HEK293 (cell line): ENCODE measurements at regions of chr15 and their contacts with region 1.

Region 1: DNA sequence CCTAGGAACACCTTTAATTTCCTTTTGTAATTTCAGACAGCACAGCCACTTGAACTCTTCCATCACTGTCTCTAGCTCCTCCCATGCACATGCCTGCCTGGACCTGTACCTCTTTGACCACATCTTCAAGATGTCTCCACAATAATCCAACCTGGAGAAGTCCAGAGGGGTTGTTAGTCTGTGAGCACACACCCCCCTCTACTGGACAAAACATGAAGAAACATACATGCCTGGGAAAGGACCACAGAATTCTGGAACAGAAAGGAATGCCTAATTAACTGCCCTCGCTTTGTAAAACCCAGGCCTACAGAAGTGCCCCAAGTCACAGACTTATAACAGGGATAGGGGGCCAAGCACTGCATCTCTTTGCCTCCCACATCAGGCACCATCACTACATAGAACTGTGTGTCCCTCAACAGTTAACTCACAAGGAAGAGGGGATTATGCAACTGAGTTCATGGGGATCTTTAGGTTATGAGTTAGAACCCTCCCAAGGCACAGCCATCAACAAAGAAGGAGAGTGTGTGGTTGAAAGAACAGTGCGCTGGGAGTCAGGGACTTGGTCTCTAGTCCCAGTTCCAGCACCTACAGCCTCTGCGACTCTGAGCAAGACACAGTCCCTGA is 61.7 kb downstream of the FMN1 start:
- H3K4me3 ChIP-seq: no peak overlapping the region
- H3K27ac ChIP-seq: no peak overlapping the region
- H3K4me1 ChIP-seq: peaks cover 4% of the 10 kb centered on the region
- CTCF ChIP-seq: peak; percentile 78

Region 2: GRCh38 chr15:32657198-32657883 is 475.5 kb before region 1 on chr15:
- CTCF ChIA-PET with region 1: interaction called, 12 read pairs
- POLR2A ChIA-PET with region 1: no interaction called
- H3K4me3 ChIP-seq: no peak overlapping the region
- H3K27ac ChIP-seq: no peak overlapping the region
- H3K4me1 ChIP-seq: no peaks in the 10 kb centered on the region
- CTCF ChIP-seq: no peak

Region 3: DNA sequence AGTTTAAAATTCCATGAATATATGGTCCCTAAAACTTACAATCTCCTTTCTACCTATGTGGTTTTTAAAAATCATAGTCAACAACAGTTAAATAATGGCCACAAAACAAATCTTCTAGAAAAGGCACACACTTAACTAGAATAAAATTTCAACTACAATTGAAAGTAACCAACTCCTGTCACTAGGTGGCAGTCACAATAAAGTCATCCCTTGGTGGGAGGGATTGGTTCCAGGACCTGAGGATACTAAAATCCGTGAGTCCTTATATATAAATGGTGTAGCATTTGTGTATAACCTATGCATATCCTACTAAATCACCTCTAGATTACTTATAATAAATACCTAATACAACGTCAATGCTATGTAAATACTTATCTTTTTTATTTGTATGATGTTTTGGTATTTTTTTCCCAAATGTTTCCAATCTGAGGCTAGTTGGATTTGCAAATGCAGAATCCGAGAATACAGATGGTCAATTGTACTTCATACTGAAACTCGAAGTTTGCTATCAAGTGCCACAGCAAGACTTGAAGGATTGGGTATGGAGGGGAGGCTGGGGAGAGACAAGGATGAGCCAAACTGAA is 110.9 kb before region 1 on chr15:
- CTCF ChIA-PET with region 1: interaction called, 20 read pairs
- POLR2A ChIA-PET with region 1: no interaction called
- H3K4me3 ChIP-seq: no peak overlapping the region
- H3K27ac ChIP-seq: no peak overlapping the region
- H3K4me1 ChIP-seq: 0 out of 2 replicates have a peak, but pooled peaks cover 2% of the 10 kb centered on the region
- CTCF ChIP-seq: no peak

Region 4: GRCh38 chr15:33086507-33087121 is 46.2 kb before region 1 on chr15:
- CTCF ChIA-PET with region 1: interaction called, 185 read pairs
- POLR2A ChIA-PET with region 1: interaction called, 4 read pairs
- H3K4me3 ChIP-seq: no peak overlapping the region
- H3K27ac ChIP-seq: no peak overlapping the region
- H3K4me1 ChIP-seq: peaks cover 12% of the 10 kb centered on the region
- CTCF ChIP-seq: 0 out of 2 replicates have a peak, but pooled peaks have one; percentile 14

Region 5: GRCh38 chr15:33119273-33119672 is 13.6 kb before region 1 on chr15:
- CTCF ChIA-PET with region 1: interaction called, 11 read pairs
- POLR2A ChIA-PET with region 1: no interaction called
- H3K4me3 ChIP-seq: no peak overlapping the region
- H3K27ac ChIP-seq: no peak overlapping the region
- H3K4me1 ChIP-seq: no peaks in the 10 kb centered on the region; the same call in 1 of the 2 replicates
- CTCF ChIP-seq: no peak